ENCODE measurements at regions of chr9 and their contacts with region 1.

Region 1: GRCh38 chr9:93453047-93453914 is at the start of gene FAM120AOS:
- DNase-seq: peak; percentile 59 to 95 (median 85)
- ATAC-seq: peak; percentile 74
- H3K4me3 ChIP-seq: peak within 1 kb of the TSS; percentile 63 to 88
- H3K4me3 Mint-ChIP-seq: peak within 1 kb of the TSS; percentile 90
- H3K27ac ChIP-seq: peak within 1 kb of the TSS; percentile 49 to 68
- H3K27ac Mint-ChIP-seq: peak within 1 kb of the TSS; percentile 95
- H3K4me1 ChIP-seq: peaks cover 27% of the 10 kb centered on the region
- H3K4me1 Mint-ChIP-seq: peaks cover 60% of the 10 kb centered on the region
- H3K27me3 ChIP-seq: no peaks in the 10 kb centered on the region
- H3K27me3 Mint-ChIP-seq: no peaks in the 10 kb centered on the region
- CTCF ChIP-seq: no peak
- total RNA-seq, gene FAM120AOS: 40.3 to 40.7 TPM

Region 2: GRCh38 chr9:93134015-93134739 is 319.1 kb before region 1 on chr9 and contains the start of gene NINJ1:
- CTCF ChIA-PET with region 1: no interaction called
- POLR2A ChIA-PET with region 1: no interaction called
- intact Hi-C with region 1: loop called in 1 of 2 experiments (anchors 10 kb)
- DNase-seq: peak; percentile 59 to 97 (median 79)
- ATAC-seq: peak; percentile 83
- H3K4me3 ChIP-seq: peak within 1 kb of the TSS; percentile 84 to 89
- H3K4me3 Mint-ChIP-seq: peak within 1 kb of the TSS; percentile 92
- H3K27ac ChIP-seq: peak within 1 kb of the TSS; percentile 85 to 92
- H3K27ac Mint-ChIP-seq: peak within 1 kb of the TSS; percentile 96
- H3K4me1 ChIP-seq: peaks cover 50% of the 10 kb centered on the region
- H3K4me1 Mint-ChIP-seq: peaks cover 56% of the 10 kb centered on the region
- H3K27me3 ChIP-seq: no peaks in the 10 kb centered on the region
- H3K27me3 Mint-ChIP-seq: no peaks in the 10 kb centered on the region
- CTCF ChIP-seq: no peak
- total RNA-seq, gene NINJ1: 214 to 229 TPM

Region 3: DNA sequence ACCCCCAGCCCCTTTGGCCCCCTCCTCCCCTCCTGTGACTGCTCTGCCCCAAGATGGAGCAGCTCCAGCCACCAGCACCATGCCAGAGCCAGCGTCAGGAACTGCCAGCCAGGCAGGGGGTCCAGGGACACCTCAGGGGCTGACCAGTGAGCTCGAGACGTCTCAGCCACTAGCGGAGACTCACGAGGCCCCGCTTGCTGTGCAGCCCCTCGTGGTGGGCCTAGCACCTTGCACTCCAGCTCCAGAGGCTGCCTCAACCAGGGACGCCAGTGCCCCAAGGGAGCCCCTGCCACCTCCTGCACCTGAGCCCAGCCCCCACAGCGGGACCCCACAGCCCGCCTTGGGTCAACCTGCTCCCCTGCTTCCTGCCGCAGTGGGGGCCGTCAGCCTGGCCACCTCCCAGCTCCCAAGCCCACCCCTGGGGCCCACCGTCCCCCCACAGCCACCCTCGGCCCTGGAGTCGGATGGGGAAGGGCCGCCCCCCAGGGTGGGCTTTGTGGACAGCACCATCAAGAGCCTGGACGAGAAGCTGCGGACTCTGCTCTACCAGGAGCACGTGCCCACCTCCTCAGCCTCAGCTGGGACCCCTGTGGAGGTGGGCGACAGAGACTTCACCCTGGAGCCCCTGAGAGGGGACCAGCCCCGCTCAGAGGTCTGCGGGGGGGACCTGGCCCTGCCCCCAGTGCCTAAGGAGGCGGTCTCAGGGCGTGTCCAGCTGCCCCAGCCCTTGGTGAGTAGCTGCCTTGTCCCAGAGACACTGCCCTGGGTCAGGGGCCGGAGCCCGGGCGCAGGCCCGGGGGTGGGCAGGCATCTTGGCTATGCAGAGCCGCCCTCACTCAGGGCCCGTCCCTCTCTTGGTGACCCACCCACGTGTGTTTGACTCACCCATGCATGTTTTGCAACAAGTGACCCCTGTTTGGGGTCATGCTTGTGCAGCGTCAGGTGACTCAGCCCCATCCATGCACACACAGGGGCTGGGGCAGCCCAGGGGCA is 164.1 kb before region 1 on chr9:
- CTCF ChIA-PET with region 1: no interaction called
- POLR2A ChIA-PET with region 1: no interaction called
- intact Hi-C with region 1: no loop called
- DNase-seq: no peak
- ATAC-seq: no peak
- H3K4me3 ChIP-seq: no peak overlapping the region
- H3K4me3 Mint-ChIP-seq: no peak overlapping the region
- H3K27ac ChIP-seq: no peak overlapping the region
- H3K27ac Mint-ChIP-seq: no peak overlapping the region
- H3K4me1 ChIP-seq: no peaks in the 10 kb centered on the region
- H3K4me1 Mint-ChIP-seq: peaks cover 2% of the 10 kb centered on the region
- H3K27me3 ChIP-seq: no peaks in the 10 kb centered on the region
- H3K27me3 Mint-ChIP-seq: peaks cover 6% of the 10 kb centered on the region
- CTCF ChIP-seq: no peak

Region 4: DNA sequence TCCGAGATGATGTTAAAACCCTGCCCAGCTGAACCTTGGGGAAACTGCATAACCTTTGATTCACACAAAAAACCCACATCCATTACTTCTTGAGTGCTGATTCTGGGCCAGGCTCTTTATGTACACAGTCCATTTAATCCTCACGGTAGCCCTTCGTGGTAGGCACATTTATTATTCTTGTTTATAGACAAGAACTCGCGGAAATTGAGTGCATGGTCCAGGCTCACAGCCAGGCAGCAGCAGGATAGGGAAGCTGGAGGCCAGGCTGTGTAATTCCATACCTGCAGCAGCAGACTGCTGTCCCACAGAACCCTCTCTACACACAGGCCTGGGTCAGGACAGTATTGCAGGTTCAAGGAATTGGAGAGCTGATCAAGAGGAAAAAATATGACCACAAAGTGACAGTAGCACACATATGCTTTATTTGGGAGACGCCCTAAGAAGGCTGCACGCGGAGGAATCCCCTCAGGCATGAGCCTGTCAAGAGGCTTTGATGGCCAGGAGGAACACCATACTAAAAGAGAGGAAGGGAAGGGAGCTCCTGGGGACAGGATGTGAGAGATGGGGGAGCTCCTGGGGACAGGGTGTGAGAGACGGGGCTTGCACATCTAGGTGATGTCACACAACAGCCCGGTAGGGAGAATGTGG is 30.2 kb before region 1 on chr9:
- CTCF ChIA-PET with region 1: no interaction called
- POLR2A ChIA-PET with region 1: no interaction called
- intact Hi-C with region 1: no loop called
- DNase-seq: no peak
- ATAC-seq: no peak
- H3K4me3 ChIP-seq: no peak overlapping the region
- H3K4me3 Mint-ChIP-seq: no peak overlapping the region
- H3K27ac ChIP-seq: no peak overlapping the region
- H3K27ac Mint-ChIP-seq: no peak overlapping the region
- H3K4me1 ChIP-seq: no peaks in the 10 kb centered on the region
- H3K4me1 Mint-ChIP-seq: no peaks in the 10 kb centered on the region
- H3K27me3 ChIP-seq: no peaks in the 10 kb centered on the region
- H3K27me3 Mint-ChIP-seq: peaks cover 9% of the 10 kb centered on the region
- CTCF ChIP-seq: no peak

Region 5: DNA sequence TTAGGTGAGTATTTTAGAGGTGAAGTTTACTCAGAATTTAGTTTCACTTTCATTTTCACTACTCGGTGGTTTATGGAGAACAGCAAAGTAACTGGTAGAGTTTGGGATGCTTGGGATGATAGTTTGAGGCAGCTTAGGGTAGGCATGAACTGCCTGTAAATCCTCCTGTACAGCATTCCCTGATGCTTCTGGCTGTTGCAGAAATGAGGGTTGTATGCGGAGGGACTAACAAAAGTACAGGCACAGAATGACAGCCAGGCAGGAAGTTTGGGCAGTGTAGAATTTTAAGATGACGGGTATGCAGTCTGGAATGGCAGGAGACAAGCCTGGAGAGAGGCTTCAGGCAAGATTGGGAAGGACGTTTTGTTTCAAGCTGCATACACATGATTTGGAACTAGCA is 48.1 kb after region 1 on chr9:
- CTCF ChIA-PET with region 1: no interaction called
- POLR2A ChIA-PET with region 1: interaction called, 3 read pairs
- intact Hi-C with region 1: loop called (anchors 5 kb)
- DNase-seq: peak in 3 of 9 experiments; percentile 14 to 52 (median 47)
- ATAC-seq: peak; percentile 51
- H3K4me3 ChIP-seq: peak overlapping the region; percentile 41 to 45
- H3K4me3 Mint-ChIP-seq: peak overlapping the region; percentile 88
- H3K27ac ChIP-seq: peak overlapping the region in 1 of 2 experiments; percentile 62
- H3K27ac Mint-ChIP-seq: peak overlapping the region; percentile 89
- H3K4me1 ChIP-seq: peaks cover 12% of the 10 kb centered on the region
- H3K4me1 Mint-ChIP-seq: peaks cover 56% of the 10 kb centered on the region
- H3K27me3 ChIP-seq: no peaks in the 10 kb centered on the region
- H3K27me3 Mint-ChIP-seq: no peaks in the 10 kb centered on the region
- CTCF ChIP-seq: no peak

Region 6: DNA sequence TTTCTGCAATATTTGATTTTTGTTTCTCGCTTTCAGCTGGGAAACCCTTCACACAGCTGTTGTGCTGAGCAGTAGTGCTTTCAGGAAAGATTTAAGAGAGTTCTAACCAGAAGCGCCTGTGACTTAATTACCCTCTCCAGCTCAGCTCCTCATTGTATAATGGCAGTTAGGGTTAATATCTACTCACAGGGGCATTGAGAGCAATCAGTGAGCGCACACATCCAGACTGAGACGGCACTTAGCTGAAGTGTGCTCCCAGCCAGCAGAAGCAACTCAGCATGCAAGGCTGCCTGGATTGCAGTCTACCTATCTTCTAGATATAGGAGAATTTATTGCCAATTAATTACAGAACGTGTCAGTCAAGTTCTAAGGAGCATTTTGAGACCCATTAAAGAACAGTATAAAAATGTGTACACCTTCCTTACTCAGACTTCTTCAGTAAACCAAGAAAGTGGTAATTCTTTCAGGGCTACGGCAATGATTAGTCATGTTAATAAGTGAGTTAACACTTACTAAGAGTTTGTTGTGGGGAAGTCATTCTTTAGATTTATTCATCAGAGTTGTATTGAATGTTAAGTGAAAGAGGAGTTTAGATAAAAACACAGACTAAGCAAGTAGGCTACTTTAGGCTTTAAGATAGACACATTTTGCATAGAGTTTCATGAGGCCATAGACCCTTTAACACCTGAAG is 989.9 kb after region 1 on chr9:
- CTCF ChIA-PET with region 1: no interaction called
- POLR2A ChIA-PET with region 1: no interaction called
- intact Hi-C with region 1: no loop called
- DNase-seq: no peak
- ATAC-seq: no peak
- H3K4me3 ChIP-seq: no peak overlapping the region
- H3K4me3 Mint-ChIP-seq: no peak overlapping the region
- H3K27ac ChIP-seq: no peak overlapping the region
- H3K27ac Mint-ChIP-seq: peak overlapping the region; percentile 1
- H3K4me1 ChIP-seq: no peaks in the 10 kb centered on the region
- H3K4me1 Mint-ChIP-seq: no peaks in the 10 kb centered on the region
- H3K27me3 ChIP-seq: no peaks in the 10 kb centered on the region
- H3K27me3 Mint-ChIP-seq: no peaks in the 10 kb centered on the region
- CTCF ChIP-seq: no peak